ENCODE measurements at regions of chr2 and their contacts with region 1.

Region 1: DNA sequence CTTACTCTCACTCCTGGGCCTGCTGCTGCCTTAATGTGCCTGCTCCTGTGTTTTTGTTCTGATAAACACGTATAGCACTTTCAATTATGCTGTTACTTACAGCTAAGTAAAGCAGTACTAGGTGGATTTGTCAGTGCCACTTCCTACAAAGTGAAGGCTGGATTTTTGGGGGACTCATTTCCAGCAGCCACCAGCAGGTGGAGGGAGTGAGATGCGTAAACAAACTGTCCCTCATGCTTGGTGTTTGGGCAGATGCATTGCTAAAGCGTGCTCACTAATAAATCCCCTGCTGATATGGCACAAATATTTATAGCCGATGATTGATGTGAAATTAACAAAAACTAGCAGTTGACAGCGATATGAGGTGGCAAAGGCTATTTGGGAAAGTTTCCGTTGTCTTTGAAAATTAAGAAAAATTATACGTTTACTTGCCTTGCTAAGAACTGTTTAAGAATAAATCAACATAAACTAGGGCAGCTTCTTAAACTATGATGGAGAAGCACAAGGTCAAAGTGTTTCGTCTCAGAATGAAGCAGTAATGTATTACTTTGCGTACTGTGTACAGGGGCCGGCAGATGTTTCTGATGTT is 101.7 kb downstream of the AGAP1 start:
- DNase-seq: peak; percentile 44 to 82 (median 76)
- H3K4me3 ChIP-seq: no peak overlapping the region
- H3K27ac ChIP-seq: no peak overlapping the region
- H3K4me1 ChIP-seq: no peaks in the 10 kb centered on the region
- H3K27me3 ChIP-seq: no peaks in the 10 kb centered on the region
- CTCF ChIP-seq: peak; percentile 63 to 86 (median 82)
- EP300 ChIP-seq: no peak
- POLR2A ChIP-seq: no peak

Region 2: GRCh38 chr2:235135990-235136561 is 459.4 kb before region 1 on chr2:
- intact Hi-C with region 1: loop called (anchors 5 to 10 kb)
- DNase-seq: peak; percentile 65 to 81 (median 77)
- H3K4me3 ChIP-seq: no peak overlapping the region
- H3K27ac ChIP-seq: no peak overlapping the region
- H3K4me1 ChIP-seq: no peaks in the 10 kb centered on the region
- H3K27me3 ChIP-seq: no peaks in the 10 kb centered on the region
- CTCF ChIP-seq: peak; percentile 19 to 42 (median 37)
- EP300 ChIP-seq: no peak
- POLR2A ChIP-seq: no peak

Region 3: DNA sequence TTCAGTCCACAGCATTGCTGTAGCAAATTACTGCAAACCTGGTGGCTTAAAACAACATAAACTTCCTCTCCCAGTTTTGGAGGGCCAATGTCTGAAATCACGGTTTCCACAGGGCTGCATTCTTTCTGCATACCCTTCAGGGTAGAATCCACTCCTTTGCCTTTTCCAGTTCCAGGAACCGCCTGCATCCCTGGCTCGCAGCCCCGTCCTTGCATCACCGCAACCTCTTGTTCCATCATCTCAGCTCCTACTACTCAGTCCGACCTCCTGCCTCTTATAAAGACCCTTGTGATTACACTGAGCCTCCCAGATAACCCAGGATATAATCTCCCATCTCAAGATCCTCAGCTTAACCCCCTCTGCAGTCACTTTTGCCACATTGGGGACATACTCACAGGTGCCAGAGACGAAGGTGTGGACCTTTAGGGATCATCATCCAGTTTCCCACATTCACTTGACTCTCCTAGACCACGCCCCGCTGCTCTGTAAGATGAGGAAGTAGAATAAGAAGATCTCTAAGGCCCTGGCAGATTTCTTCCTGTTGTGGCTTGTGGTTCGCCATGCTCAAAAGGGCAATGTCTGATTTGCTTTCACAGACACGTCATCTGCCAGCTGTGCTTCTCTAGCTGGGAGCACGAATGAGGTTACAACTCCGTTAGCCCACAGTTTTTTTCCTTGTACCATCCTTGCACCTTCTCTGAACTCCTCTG is 205.3 kb before region 1 on chr2:
- intact Hi-C with region 1: no loop called
- DNase-seq: no peak
- H3K4me3 ChIP-seq: no peak overlapping the region
- H3K27ac ChIP-seq: no peak overlapping the region
- H3K4me1 ChIP-seq: no peaks in the 10 kb centered on the region
- H3K27me3 ChIP-seq: no peaks in the 10 kb centered on the region
- CTCF ChIP-seq: no peak
- EP300 ChIP-seq: no peak
- POLR2A ChIP-seq: no peak

Region 4: DNA sequence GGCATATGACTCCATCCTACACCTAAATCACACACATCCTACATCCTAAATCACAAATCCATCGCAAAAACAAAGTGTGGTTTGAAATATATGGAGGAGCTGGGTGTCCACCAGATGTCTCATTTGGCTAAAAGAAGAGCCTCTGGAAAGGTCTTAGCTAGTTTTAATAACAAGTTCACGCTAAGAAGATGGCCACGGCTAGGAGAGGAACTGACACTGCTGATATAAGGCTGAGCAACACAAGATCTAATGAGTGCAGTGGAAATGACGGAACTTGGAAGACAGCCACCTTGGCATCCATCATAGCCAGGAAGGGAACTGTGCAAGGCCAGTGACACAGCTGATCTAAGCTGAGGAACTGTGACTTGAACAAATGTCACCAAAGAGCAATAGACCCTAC is 161.7 kb before region 1 on chr2:
- intact Hi-C with region 1: loop called in 1 of 4 experiments (anchors 10 kb)
- DNase-seq: peak; percentile 22 to 56 (median 37)
- H3K4me3 ChIP-seq: no peak overlapping the region
- H3K27ac ChIP-seq: peak overlapping the region in 1 of 2 donors; percentile 44
- H3K4me1 ChIP-seq: peaks cover 2% of the 10 kb centered on the region
- H3K27me3 ChIP-seq: no peaks in the 10 kb centered on the region
- CTCF ChIP-seq: no peak
- EP300 ChIP-seq: no peak
- POLR2A ChIP-seq: no peak

Region 5: DNA sequence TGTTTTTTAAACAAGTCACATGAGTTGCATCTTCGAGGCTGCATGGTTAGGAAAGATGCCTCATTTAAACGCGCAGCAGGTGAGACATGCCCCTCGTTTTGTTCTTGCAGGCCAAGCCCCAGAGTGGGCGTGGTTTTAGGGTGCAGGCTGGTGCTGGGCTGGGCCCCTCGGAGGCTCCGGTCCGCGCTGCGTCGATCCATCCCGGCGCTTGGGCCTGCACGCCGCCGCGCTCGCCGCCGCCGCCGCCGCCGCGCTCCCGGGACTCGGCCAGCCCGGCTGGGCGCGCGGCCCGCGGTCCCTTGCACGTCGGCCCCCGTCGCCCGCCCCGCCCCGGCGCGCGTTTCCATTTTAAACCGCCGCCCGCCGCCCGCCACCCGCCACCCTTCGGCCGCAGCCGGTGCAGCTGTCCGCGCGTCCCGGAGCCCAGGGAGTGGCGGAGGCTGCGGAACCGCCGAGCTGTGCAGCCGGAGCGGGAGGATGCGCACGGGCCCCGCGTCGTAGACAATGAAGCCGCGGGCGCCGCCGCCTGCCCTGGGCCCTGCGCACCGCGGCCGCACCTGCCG is 73.8 kb after region 1 on chr2:
- intact Hi-C with region 1: loop called (anchors 2 to 10 kb)
- DNase-seq: peak; percentile 50 to 73 (median 71)
- H3K4me3 ChIP-seq: peak overlapping the region; percentile 50
- H3K27ac ChIP-seq: no peak overlapping the region
- H3K4me1 ChIP-seq: peaks cover 7% of the 10 kb centered on the region
- H3K27me3 ChIP-seq: no peaks in the 10 kb centered on the region
- CTCF ChIP-seq: no peak
- EP300 ChIP-seq: no peak
- POLR2A ChIP-seq: no peak

Region 6: DNA sequence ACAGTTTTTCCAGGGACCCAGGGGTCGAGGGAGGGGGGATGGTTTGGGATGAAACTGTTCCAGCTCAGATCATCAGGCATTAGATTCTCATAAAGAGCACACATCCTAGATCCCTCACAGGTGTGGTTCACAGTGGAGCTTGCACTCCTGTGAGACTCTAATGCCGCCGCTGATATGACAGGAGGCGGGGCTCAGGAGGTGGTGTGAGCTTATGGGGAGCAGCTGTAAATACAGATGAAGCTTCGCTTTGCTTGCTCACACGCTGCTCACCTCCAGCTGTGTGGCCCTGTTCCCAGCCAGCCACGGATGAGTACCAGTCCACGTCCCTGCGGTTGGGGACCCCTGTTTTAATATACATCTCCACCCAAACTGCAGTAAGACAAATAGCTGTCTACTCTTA is 102.5 kb after region 1 on chr2:
- intact Hi-C with region 1: no loop called
- DNase-seq: no peak
- H3K4me3 ChIP-seq: no peak overlapping the region
- H3K27ac ChIP-seq: no peak overlapping the region
- H3K4me1 ChIP-seq: peaks cover 1% of the 10 kb centered on the region
- H3K27me3 ChIP-seq: no peaks in the 10 kb centered on the region
- CTCF ChIP-seq: no peak
- EP300 ChIP-seq: no peak
- POLR2A ChIP-seq: no peak

Region 7: GRCh38 chr2:235746257-235747084 is 151.0 kb after region 1 on chr2:
- intact Hi-C with region 1: loop called (anchors 5 kb)
- DNase-seq: peak; percentile 41 to 78 (median 57)
- H3K4me3 ChIP-seq: no peak overlapping the region
- H3K27ac ChIP-seq: no peak overlapping the region
- H3K4me1 ChIP-seq: no peaks in the 10 kb centered on the region
- H3K27me3 ChIP-seq: no peaks in the 10 kb centered on the region
- CTCF ChIP-seq: peak; percentile 55 to 82 (median 69)
- EP300 ChIP-seq: no peak
- POLR2A ChIP-seq: no peak